ENCODE measurements at regions of chr10 and their contacts with region 1.

Region 1: DNA sequence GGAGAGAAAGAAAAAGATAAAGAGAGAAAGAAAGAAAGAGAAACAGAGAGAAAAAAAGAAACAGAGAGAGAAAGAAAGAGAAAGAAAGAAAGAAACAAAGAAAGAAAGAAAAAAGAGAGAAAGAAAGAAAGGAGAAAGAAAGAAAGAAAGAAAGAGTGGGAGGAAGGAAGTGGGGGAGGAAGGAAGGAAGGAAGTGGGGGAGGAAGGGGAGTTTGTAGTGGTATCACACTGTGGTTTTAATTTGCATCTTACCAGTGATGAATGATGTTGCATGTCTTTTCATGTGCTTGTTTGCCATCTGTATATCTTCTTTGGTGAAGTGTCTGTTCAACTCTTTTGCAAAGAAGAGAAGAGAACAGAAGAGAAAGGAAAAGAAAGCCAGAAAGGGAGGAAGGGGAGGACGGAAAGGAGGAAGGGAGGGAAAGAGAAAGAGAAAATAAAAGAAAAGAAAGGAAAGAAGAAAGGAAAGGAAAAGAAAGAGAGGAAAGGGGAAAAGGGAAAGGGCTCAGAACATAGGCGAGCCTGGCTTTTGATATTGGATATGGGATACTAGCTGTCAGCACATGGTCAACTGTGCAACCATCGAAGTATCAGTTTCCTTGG is 79.2 kb upstream of the FRMD4A start:
- DNase-seq: no peak
- H3K4me3 Mint-ChIP-seq: no peak overlapping the region
- H3K27ac Mint-ChIP-seq: no peak overlapping the region
- H3K4me1 Mint-ChIP-seq: peaks cover 14% of the 10 kb centered on the region
- H3K27me3 Mint-ChIP-seq: peaks cover 23% of the 10 kb centered on the region

Region 2: DNA sequence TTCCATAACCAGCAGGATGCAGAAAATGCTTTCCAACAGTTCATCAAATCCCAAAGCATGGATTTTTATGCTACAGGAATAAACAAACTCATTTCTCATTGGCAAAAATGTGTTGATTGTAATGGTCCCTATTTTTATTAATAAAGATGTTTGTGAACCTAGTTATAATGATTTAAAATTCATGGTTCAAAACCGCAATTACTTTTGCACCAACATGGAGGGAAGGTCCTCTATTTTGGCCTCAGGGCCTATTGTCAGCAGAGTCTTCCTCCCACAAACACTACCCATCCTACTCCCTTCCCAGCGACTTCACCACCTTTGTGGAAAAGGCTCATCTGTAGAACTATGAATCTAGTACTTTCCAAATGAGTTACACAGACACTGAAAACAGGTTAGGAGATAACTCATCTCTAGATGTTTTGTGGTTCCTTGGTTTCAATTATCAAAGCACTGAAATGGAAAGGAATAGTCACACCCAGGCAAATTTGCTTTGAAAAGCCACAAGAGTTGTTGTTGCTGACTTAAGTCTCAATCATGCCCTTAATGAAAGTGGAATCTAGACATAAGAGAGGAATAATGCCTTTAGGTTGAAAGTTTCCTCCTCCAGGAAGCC is 19.9 kb before region 1 on chr10:
- intact Hi-C with region 1: loop called (anchors 1 kb)
- DNase-seq: peak; percentile 14
- H3K4me3 Mint-ChIP-seq: no peak overlapping the region
- H3K27ac Mint-ChIP-seq: no peak overlapping the region
- H3K4me1 Mint-ChIP-seq: peaks cover 24% of the 10 kb centered on the region
- H3K27me3 Mint-ChIP-seq: peaks cover 41% of the 10 kb centered on the region

Measured in activated T-helper 2 cell treated with anti-CD3 and anti-CD28 coated beads, Interferon-gamma antibody, Interleukin-2, Interleukin-4, amounts not matched to agents 10 μg/mL and 5 μg/mL and 100 μg/mL, durations not matched to agents 14 hours and 24 hours and 36 hours (primary cell).